CD4-positive, alpha-beta T cell (primary cell): ENCODE measurements at regions of chr3 and their contacts with region 1.

Region 1: DNA sequence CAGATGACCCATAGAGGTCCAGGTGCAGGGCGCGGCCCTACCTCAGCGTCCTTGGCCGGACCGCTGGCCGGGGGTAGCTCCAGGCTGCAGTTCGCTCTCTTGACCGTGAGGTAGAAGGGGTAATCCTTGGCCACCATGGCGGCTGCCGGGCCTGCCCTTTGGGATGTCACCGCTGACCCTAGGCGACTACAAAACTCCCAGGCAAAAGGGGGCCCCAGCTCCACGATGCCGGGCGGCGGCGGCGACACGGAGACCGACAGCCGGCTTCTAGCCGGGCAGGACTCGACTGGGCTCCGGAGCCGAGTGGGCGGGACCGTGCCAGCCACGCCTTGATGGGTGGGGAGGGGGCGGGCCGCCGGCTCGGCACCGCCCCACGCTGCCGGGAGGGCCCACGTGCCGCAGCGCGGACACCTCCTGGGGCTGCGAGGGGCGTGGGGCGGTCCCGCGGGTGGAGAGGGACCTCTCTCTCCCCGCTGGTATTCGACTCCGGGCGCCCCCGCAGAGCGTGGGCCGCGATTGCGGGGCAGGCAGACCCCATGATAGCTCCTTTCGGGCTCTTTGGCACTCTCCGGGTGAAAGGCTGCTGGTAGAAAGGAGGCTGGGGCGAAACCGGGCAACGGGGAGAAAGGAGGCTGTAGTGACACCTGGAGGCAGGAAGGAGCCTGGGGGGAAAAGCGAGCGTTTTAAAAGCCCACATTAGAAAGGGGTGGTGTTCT is at the start of gene ARHGEF3:
- DNase-seq: peak; percentile 76 to 94 (median 87)
- ATAC-seq: peak; percentile 76
- H3K4me3 ChIP-seq: peak within 1 kb of the TSS; percentile 98
- H3K4me3 Mint-ChIP-seq: peak within 1 kb of the TSS; percentile 95
- H3K27ac ChIP-seq: peak within 1 kb of the TSS; percentile 75 to 82
- H3K27ac Mint-ChIP-seq: peak within 1 kb of the TSS; percentile 89
- H3K4me1 ChIP-seq: peaks cover 23% of the 10 kb centered on the region
- H3K4me1 Mint-ChIP-seq: peaks cover 57% of the 10 kb centered on the region
- H3K27me3 ChIP-seq: no peaks in the 10 kb centered on the region
- H3K27me3 Mint-ChIP-seq: no peaks in the 10 kb centered on the region
- CTCF ChIP-seq: peak; percentile 72
- total RNA-seq, gene ARHGEF3: 46.4 to 46.6 TPM

Region 2: DNA sequence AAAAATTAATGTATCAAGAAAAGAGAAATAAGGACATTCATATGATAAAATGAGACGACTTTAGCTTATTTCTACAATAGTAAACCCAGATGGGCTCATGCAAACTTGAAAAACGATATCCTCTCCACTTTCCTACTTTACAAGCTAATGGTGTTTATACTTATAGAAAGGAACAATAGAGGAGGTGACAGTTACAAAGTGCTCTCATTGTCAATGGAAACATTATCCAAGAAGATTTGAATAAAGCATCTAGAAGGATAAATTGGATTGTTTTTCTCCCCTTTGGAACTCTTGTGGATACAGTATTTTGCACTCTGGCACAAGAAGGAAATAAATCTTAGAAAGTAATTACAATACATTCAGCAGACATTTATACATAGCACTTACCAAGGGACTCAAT is 265.1 kb before region 1 on chr3:
- CTCF ChIA-PET with region 1: no interaction called
- POLR2A ChIA-PET with region 1: no interaction called
- intact Hi-C with region 1: no loop called
- DNase-seq: no peak
- ATAC-seq: no peak
- H3K4me3 ChIP-seq: no peak overlapping the region
- H3K4me3 Mint-ChIP-seq: no peak overlapping the region
- H3K27ac ChIP-seq: no peak overlapping the region
- H3K27ac Mint-ChIP-seq: no peak overlapping the region
- H3K4me1 ChIP-seq: no peaks in the 10 kb centered on the region
- H3K4me1 Mint-ChIP-seq: no peaks in the 10 kb centered on the region
- H3K27me3 ChIP-seq: no peaks in the 10 kb centered on the region
- H3K27me3 Mint-ChIP-seq: peaks cover 8% of the 10 kb centered on the region
- CTCF ChIP-seq: no peak

Region 3: GRCh38 chr3:56556908-56557830 is 244.7 kb before region 1 on chr3 and contains the start of gene CCDC66:
- CTCF ChIA-PET with region 1: no interaction called
- POLR2A ChIA-PET with region 1: interaction called, 16 read pairs
- intact Hi-C with region 1: loop called in 1 of 2 experiments (anchors 5 kb)
- DNase-seq: peak; percentile 89 to 97 (median 93)
- ATAC-seq: peak; percentile 87
- H3K4me3 ChIP-seq: peak within 1 kb of the TSS; percentile 69
- H3K4me3 Mint-ChIP-seq: peak within 1 kb of the TSS; percentile 99
- H3K27ac ChIP-seq: peak within 1 kb of the TSS; percentile 85 to 94
- H3K27ac Mint-ChIP-seq: peak within 1 kb of the TSS; percentile 97
- H3K4me1 ChIP-seq: peaks cover 6% of the 10 kb centered on the region
- H3K4me1 Mint-ChIP-seq: peaks cover 31% of the 10 kb centered on the region
- H3K27me3 ChIP-seq: no peaks in the 10 kb centered on the region
- H3K27me3 Mint-ChIP-seq: no peaks in the 10 kb centered on the region
- CTCF ChIP-seq: peak; percentile 67
- total RNA-seq, gene CCDC66: 97.1 to 101 TPM

Region 4: GRCh38 chr3:56702490-56703315 is 99.1 kb before region 1 on chr3:
- CTCF ChIA-PET with region 1: interaction called, 50 read pairs
- POLR2A ChIA-PET with region 1: interaction called, 84 read pairs
- intact Hi-C with region 1: loop called (anchors 1 kb)
- DNase-seq: peak in 11 of 14 experiments; percentile 14 to 86 (median 40)
- ATAC-seq: peak; percentile 77
- H3K4me3 ChIP-seq: no peak overlapping the region
- H3K4me3 Mint-ChIP-seq: no peak overlapping the region
- H3K27ac ChIP-seq: no peak overlapping the region
- H3K27ac Mint-ChIP-seq: no peak overlapping the region
- H3K4me1 ChIP-seq: peaks cover 12% of the 10 kb centered on the region
- H3K4me1 Mint-ChIP-seq: peaks cover 29% of the 10 kb centered on the region
- H3K27me3 ChIP-seq: no peaks in the 10 kb centered on the region
- H3K27me3 Mint-ChIP-seq: no peaks in the 10 kb centered on the region
- CTCF ChIP-seq: peak; percentile 84

Region 5: GRCh38 chr3:56762718-56763117 is 39.1 kb before region 1 on chr3:
- CTCF ChIA-PET with region 1: interaction called, 15 read pairs
- POLR2A ChIA-PET with region 1: interaction called, 10 read pairs
- intact Hi-C with region 1: no loop called
- DNase-seq: no peak
- ATAC-seq: no peak
- H3K4me3 ChIP-seq: no peak overlapping the region
- H3K4me3 Mint-ChIP-seq: no peak overlapping the region
- H3K27ac ChIP-seq: no peak overlapping the region
- H3K27ac Mint-ChIP-seq: peak overlapping the region; percentile 90
- H3K4me1 ChIP-seq: peaks cover 38% of the 10 kb centered on the region
- H3K4me1 Mint-ChIP-seq: peaks cover 82% of the 10 kb centered on the region
- H3K27me3 ChIP-seq: no peaks in the 10 kb centered on the region
- H3K27me3 Mint-ChIP-seq: no peaks in the 10 kb centered on the region
- CTCF ChIP-seq: no peak

Region 6: DNA sequence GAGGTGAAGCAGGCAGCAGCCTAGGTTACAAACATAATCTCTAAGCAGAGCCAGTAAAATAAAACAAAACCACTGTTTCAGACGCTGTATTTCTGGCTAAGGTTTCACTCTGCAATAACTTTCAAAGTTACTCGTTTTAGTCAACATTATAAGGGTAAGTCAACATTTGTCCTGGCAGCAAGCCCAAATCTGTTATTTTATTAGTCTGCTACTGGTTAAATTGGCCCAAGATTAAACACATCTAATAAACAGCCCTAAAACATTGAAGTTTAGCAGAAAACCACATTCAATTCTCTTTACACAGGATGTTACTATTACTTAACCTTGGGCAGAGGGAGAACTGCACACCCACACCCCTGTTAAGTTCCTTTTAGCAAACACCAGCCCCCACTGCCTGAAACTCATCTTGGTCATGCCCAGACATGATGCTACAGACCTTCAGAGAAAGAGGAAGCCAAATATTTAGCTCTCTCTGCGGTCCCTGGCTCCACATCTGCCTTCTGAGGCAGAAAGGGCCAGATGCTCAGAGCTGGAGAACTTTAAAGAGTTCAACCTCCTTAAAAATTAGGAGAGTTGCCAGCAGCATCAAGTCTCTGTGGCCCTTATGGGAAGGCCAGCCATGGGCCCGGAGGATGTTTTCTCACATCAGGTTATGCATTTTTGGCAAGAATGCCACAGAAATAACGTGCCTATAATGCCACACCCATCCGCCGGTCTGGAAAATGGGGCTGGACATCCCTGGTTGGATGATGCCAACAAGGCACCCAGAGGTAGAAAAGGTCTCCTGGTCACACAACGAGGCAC is 18.0 kb before region 1 on chr3:
- CTCF ChIA-PET with region 1: interaction called, 114 read pairs
- POLR2A ChIA-PET with region 1: interaction called, 251 read pairs
- intact Hi-C with region 1: loop called (anchors 1 to 2 kb)
- DNase-seq: peak; percentile 40 to 92 (median 66)
- ATAC-seq: peak; percentile 83
- H3K4me3 ChIP-seq: peak overlapping the region; percentile 28
- H3K4me3 Mint-ChIP-seq: peak overlapping the region; percentile 60
- H3K27ac ChIP-seq: peak overlapping the region; percentile 82 to 87
- H3K27ac Mint-ChIP-seq: peak overlapping the region; percentile 88
- H3K4me1 ChIP-seq: peaks cover 91% of the 10 kb centered on the region
- H3K4me1 Mint-ChIP-seq: peaks cover 99% of the 10 kb centered on the region
- H3K27me3 ChIP-seq: no peaks in the 10 kb centered on the region
- H3K27me3 Mint-ChIP-seq: no peaks in the 10 kb centered on the region
- CTCF ChIP-seq: no peak

Region 7: DNA sequence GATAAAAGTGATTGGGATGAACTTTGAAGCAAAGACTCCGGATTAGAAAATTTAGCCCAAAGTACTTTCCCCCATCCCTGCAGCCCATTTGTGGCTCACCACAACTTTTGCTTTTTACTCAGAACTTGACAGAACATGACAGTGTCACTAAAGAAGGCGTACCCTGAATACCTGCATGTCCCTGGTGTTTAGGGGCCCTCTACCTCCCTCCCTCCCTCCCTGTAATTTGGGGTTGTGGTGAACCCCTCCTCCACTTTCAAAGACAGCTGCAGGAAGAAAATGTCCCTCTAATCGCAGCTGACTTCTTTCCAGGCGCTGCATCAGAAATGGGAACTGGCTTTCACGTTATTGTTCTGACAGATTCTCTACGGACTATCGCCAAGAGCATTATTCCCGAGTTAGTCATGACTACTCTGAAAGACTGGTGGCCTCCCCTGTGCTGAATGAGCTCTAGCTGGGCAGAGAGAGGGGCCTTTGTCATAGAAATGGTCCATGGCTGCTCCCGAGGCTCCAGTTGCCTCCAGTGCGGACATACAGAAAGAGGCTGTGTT is 93.1 kb after region 1 on chr3:
- CTCF ChIA-PET with region 1: interaction called, 8 read pairs
- POLR2A ChIA-PET with region 1: interaction called, 20 read pairs
- intact Hi-C with region 1: no loop called
- DNase-seq: peak in 4 of 14 experiments; percentile 17 to 58 (median 44)
- ATAC-seq: peak; percentile 81
- H3K4me3 ChIP-seq: no peak overlapping the region
- H3K4me3 Mint-ChIP-seq: peak overlapping the region; percentile 51
- H3K27ac ChIP-seq: peak overlapping the region in 1 of 2 donors; percentile 11
- H3K27ac Mint-ChIP-seq: peak overlapping the region; percentile 80
- H3K4me1 ChIP-seq: peaks cover 48% of the 10 kb centered on the region
- H3K4me1 Mint-ChIP-seq: peaks cover 72% of the 10 kb centered on the region
- H3K27me3 ChIP-seq: no peaks in the 10 kb centered on the region
- H3K27me3 Mint-ChIP-seq: no peaks in the 10 kb centered on the region
- CTCF ChIP-seq: no peak

Region 8: GRCh38 chr3:56937580-56937979 is 135.8 kb after region 1 on chr3:
- CTCF ChIA-PET with region 1: no interaction called
- POLR2A ChIA-PET with region 1: no interaction called
- intact Hi-C with region 1: no loop called
- DNase-seq: no peak
- ATAC-seq: no peak
- H3K4me3 ChIP-seq: no peak overlapping the region
- H3K4me3 Mint-ChIP-seq: no peak overlapping the region
- H3K27ac ChIP-seq: no peak overlapping the region
- H3K27ac Mint-ChIP-seq: no peak overlapping the region
- H3K4me1 ChIP-seq: peaks cover 3% of the 10 kb centered on the region
- H3K4me1 Mint-ChIP-seq: peaks cover 10% of the 10 kb centered on the region
- H3K27me3 ChIP-seq: no peaks in the 10 kb centered on the region
- H3K27me3 Mint-ChIP-seq: no peaks in the 10 kb centered on the region
- CTCF ChIP-seq: no peak

Region 9: GRCh38 chr3:56955492-56956111 is 153.8 kb after region 1 on chr3:
- CTCF ChIA-PET with region 1: no interaction called
- POLR2A ChIA-PET with region 1: no interaction called
- intact Hi-C with region 1: no loop called
- DNase-seq: no peak
- ATAC-seq: no peak
- H3K4me3 ChIP-seq: no peak overlapping the region
- H3K4me3 Mint-ChIP-seq: no peak overlapping the region
- H3K27ac ChIP-seq: no peak overlapping the region
- H3K27ac Mint-ChIP-seq: no peak overlapping the region
- H3K4me1 ChIP-seq: no peaks in the 10 kb centered on the region
- H3K4me1 Mint-ChIP-seq: no peaks in the 10 kb centered on the region
- H3K27me3 ChIP-seq: no peaks in the 10 kb centered on the region
- H3K27me3 Mint-ChIP-seq: no peaks in the 10 kb centered on the region
- CTCF ChIP-seq: no peak

Region 10: DNA sequence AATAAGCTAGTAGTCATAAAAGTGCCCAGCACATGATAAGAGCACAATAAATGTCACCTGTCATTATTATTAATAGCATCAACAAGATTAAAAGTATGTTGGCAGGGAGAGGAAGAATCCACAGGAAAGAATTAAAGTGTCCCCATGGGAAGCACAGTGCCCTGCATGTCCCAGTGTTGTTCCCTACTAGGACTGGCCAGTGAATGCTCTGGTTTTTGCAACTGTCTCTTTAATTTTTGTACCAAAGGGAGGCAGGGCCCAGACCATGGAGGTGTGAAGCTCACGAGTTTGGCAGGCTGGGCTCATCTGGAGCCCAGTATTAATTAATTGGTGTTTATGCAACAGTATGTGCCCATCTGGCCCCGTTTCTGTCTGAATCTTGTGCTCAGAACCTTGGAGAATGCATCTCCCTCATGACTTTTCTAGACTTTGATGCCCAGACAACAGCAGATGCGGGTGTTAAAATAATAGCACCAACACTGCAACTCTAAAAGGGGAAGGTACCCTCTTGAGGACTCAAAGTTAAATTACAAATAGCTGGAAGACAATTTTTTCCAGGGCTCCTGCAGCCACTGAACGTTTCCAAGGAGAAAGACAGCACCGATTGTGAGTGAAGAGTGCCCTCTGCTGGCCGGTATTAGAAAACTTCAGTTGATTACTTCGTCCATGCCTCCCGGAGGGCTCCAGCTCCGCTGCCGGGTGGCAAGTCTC is 186.8 kb after region 1 on chr3:
- CTCF ChIA-PET with region 1: interaction called, 24 read pairs
- POLR2A ChIA-PET with region 1: interaction called, 22 read pairs
- intact Hi-C with region 1: loop called (anchors 1 to 2 kb)
- DNase-seq: peak; percentile 47 to 88 (median 62)
- ATAC-seq: peak; percentile 67
- H3K4me3 ChIP-seq: no peak overlapping the region
- H3K4me3 Mint-ChIP-seq: peak overlapping the region; percentile 27
- H3K27ac ChIP-seq: no peak overlapping the region
- H3K27ac Mint-ChIP-seq: no peak overlapping the region
- H3K4me1 ChIP-seq: peaks cover 17% of the 10 kb centered on the region
- H3K4me1 Mint-ChIP-seq: peaks cover 20% of the 10 kb centered on the region
- H3K27me3 ChIP-seq: no peaks in the 10 kb centered on the region
- H3K27me3 Mint-ChIP-seq: peaks cover 8% of the 10 kb centered on the region
- CTCF ChIP-seq: peak; percentile 99

Region 11: DNA sequence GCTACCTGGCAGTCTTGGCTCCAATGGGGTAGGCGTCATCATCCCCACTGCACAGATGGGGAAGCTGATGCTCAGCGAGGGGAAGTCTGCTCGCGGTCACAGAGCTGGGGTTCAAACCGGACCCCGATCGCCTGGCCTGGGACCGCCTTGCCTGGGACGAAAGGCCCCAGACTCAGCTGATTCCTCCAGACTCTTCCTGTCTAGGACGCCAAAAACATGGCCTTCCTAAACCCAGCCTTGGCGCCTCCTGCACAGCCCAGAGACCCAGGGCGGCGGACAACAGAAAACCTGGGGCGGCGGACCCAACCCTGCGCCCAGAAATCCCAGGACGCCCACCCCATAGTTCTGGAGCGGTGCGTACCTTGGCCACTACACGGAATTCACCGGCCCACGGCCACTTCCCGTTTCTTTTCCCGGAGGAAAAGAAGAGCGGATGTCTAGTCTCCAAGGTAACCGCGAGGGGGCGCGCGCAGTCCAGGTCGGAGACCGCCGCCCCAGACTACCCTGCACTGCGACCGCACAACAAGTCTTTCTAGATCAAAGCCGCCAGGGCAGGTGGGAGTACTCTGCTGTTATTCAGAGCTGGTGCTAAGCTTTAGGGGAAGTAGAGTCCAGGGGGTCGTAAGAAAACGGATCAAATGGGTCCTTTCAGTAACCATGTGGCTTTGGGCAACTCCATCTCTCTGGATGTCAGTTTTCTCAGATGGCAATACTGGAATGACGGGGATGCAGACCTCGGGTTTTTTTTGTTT is 368.2 kb after region 1 on chr3:
- CTCF ChIA-PET with region 1: no interaction called
- POLR2A ChIA-PET with region 1: no interaction called
- intact Hi-C with region 1: no loop called
- DNase-seq: peak; percentile 28 to 77 (median 51)
- ATAC-seq: peak; percentile 56
- H3K4me3 ChIP-seq: peak overlapping the region; percentile 38
- H3K4me3 Mint-ChIP-seq: no peak overlapping the region
- H3K27ac ChIP-seq: no peak overlapping the region
- H3K27ac Mint-ChIP-seq: no peak overlapping the region
- H3K4me1 ChIP-seq: peaks cover 8% of the 10 kb centered on the region
- H3K4me1 Mint-ChIP-seq: peaks cover 7% of the 10 kb centered on the region
- H3K27me3 ChIP-seq: peaks cover 30 to 47% of the 10 kb centered on the region in 2 experiments
- H3K27me3 Mint-ChIP-seq: peaks cover 78% of the 10 kb centered on the region
- CTCF ChIP-seq: peak; percentile 97